ENCODE measurements at regions of chr2 and their contacts with region 1.

Region 1: DNA sequence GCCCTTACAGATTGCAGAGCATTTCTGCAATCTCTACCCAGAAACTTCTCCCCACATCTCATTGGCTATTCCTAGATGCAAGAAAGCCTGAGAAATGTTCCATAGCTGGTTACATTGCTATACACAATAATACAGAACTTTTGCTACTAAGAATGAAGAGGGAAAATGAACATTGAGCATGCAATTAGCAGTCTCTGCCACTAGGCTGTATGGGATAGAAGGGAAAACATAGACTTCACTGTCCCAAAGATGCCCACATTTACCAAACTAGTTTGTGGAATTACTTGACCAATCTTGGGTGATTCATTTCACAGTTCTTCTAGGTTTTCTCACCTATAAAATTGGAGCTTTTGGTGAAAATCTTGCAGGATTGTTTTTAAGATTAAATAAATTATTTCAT is 265.7 kb upstream of the NT5C1B start:
- DNase-seq: no peak
- H3K4me3 ChIP-seq: no peak overlapping the region
- H3K27ac ChIP-seq: no peak overlapping the region
- H3K4me1 ChIP-seq: no peaks in the 10 kb centered on the region
- H3K27me3 ChIP-seq: peaks cover 0 to 5% (median 0%) of the 10 kb centered on the region in 4 experiments; a peak in 1 of 7 replicates
- CTCF ChIP-seq: peak in 2 of 3 experiments; percentile 16 to 64; a peak in 1 of 4 replicates
- EP300 ChIP-seq: no peak
- POLR2A ChIP-seq: no peak
- RAD21 ChIP-seq: peak; percentile 47 to 49

Region 2: DNA sequence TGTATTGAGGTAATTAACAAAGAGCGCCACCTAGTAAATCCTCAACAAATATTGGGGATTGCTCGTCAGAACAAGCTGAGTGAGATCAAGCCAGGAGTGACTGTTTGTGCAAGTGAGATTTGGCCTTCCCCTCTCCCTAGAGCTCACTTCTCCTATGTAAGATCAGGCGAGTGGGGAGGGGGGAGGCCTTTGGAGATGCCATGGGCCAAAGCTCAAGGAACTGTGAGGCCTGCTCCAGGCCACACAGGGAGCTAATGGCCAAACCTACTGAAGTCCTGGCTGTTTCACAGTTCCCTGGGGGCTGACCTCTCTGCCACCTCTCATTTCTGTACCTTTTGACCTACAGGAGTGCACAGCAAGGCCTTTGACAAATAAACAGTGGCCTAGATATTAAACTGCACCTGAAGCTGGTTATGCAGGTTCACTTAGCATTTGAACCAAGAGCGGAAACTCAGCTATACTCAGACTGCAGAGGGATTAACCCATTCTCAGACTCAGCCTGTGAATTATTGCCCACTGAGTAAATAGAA is 30.7 kb before region 1 on chr2:
- CTCF ChIA-PET with region 1: interaction called, 10 read pairs
- POLR2A ChIA-PET with region 1: no interaction called
- DNase-seq: no peak
- H3K4me3 ChIP-seq: no peak overlapping the region
- H3K27ac ChIP-seq: no peak overlapping the region
- H3K4me1 ChIP-seq: 0 out of 7 replicates have a peak, but pooled peaks cover 0 to 3% (median 0%) of the 10 kb centered on the region in 4 experiments
- H3K27me3 ChIP-seq: no peaks in the 10 kb centered on the region
- CTCF ChIP-seq: no peak
- EP300 ChIP-seq: no peak
- POLR2A ChIP-seq: no peak
- RAD21 ChIP-seq: 0 out of 4 replicates have a peak, but pooled peaks of 1 of the 2 experiments have one; percentile 6

Region 3: DNA sequence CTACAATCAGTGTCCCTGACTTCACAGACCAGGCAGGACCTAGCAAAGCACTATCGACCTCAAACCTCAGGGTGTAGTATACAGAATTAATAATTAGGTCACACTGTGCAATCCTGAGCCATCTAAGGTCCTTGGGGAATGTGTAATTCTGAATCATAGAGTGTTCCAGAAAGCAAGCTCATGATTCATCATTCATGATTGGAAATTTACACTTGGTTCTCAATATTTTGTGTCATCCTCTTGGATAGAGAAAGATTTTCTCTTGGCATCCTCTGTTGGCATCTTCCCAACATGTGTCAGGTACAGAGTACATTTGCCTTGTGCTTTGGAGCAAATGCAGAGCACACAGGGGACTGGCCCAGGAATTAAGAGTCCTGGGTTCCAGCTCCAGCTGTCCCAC is 20.7 kb before region 1 on chr2:
- CTCF ChIA-PET with region 1: interaction called, 12 read pairs
- POLR2A ChIA-PET with region 1: no interaction called
- DNase-seq: no peak
- H3K4me3 ChIP-seq: no peak overlapping the region
- H3K27ac ChIP-seq: no peak overlapping the region
- H3K4me1 ChIP-seq: peaks cover 0 to 10% (median 5%) of the 10 kb centered on the region in 4 experiments; a peak in 4 of 7 replicates
- H3K27me3 ChIP-seq: no peaks in the 10 kb centered on the region
- CTCF ChIP-seq: no peak
- EP300 ChIP-seq: no peak
- POLR2A ChIP-seq: no peak
- RAD21 ChIP-seq: no peak

Region 4: GRCh38 chr2:18871430-18871829 is 16.4 kb after region 1 on chr2:
- CTCF ChIA-PET with region 1: interaction called, 12 read pairs
- POLR2A ChIA-PET with region 1: no interaction called
- DNase-seq: no peak
- H3K4me3 ChIP-seq: no peak overlapping the region
- H3K27ac ChIP-seq: no peak overlapping the region
- H3K4me1 ChIP-seq: no peaks in the 10 kb centered on the region
- H3K27me3 ChIP-seq: no peaks in the 10 kb centered on the region
- CTCF ChIP-seq: no peak
- EP300 ChIP-seq: no peak
- POLR2A ChIP-seq: no peak
- RAD21 ChIP-seq: no peak

Region 5: GRCh38 chr2:18889565-18890332 is 34.7 kb after region 1 on chr2:
- CTCF ChIA-PET with region 1: interaction called, 21 read pairs
- POLR2A ChIA-PET with region 1: no interaction called
- DNase-seq: no peak
- H3K4me3 ChIP-seq: no peak overlapping the region
- H3K27ac ChIP-seq: no peak overlapping the region
- H3K4me1 ChIP-seq: no peaks in the 10 kb centered on the region
- H3K27me3 ChIP-seq: no peaks in the 10 kb centered on the region
- CTCF ChIP-seq: no peak
- EP300 ChIP-seq: no peak
- POLR2A ChIP-seq: no peak
- RAD21 ChIP-seq: no peak